Heart left ventricle (tissue), 16 donors: ENCODE measurements at regions of chr4 and their contacts with region 1.

Region 1: DNA sequence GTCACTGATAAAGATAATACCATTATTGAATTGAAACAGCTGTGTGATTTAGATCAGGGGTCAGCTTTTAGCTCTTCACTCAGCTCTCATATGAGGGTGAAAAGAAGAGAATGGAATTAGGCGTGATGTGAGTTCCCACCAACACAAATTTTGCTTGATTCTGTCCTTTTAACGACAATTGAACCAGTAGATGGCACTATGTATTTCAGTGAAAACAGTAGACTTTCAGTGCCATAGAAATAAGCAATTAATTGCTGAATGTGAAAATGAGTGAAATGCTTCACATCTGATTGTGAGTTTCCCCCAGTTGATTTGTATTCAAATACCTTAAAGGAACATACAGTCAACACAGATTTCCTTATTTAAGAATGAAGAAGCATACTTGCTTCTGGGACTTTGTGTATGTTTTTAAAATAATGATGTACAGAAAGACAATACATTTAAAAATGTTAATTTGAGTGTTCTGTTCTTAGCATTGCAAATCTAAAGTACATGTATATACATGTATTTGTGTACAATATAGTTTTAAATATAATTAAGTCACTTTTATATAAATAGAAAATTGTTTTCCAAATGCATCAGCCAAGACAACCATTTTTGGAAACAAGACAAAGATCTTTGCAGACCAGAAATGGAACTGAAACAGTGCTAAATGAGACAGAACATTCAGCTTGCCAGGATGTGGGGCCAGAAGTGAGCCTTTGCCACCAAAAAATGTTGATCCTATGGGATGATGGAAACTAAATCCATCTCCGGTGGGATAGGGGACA is 178.8 kb downstream of the SNCA start:
- DNase-seq: no peak
- ATAC-seq: no peak
- H3K4me3 ChIP-seq: no peak overlapping the region
- H3K27ac ChIP-seq: no peak overlapping the region
- H3K4me1 ChIP-seq: peaks cover 0 to 5% (median 0%) of the 10 kb centered on the region in 12 donors
- H3K27me3 ChIP-seq: no peaks in the 10 kb centered on the region
- CTCF ChIP-seq: peak in 10 of 12 donors; percentile 19 to 58 (median 39)
- POLR2A ChIP-seq: no peak

Region 2: GRCh38 chr4:89528526-89529133 is 129.5 kb before region 1 on chr4:
- intact Hi-C with region 1: no loop called
- DNase-seq: no peak
- ATAC-seq: no peak
- H3K4me3 ChIP-seq: no peak overlapping the region
- H3K27ac ChIP-seq: no peak overlapping the region
- H3K4me1 ChIP-seq: no peaks in the 10 kb centered on the region
- H3K27me3 ChIP-seq: peaks cover 0 to 2% (median 0%) of the 10 kb centered on the region in 9 donors
- CTCF ChIP-seq: no peak
- POLR2A ChIP-seq: no peak

Region 3: GRCh38 chr4:89619206-89619962 is 38.7 kb before region 1 on chr4:
- intact Hi-C with region 1: no loop called
- DNase-seq: no peak
- ATAC-seq: no peak
- H3K4me3 ChIP-seq: no peak overlapping the region
- H3K27ac ChIP-seq: no peak overlapping the region
- H3K4me1 ChIP-seq: no peaks in the 10 kb centered on the region
- H3K27me3 ChIP-seq: no peaks in the 10 kb centered on the region
- CTCF ChIP-seq: no peak
- POLR2A ChIP-seq: no peak

Region 4: GRCh38 chr4:89765966-89766365 is 107.8 kb after region 1 on chr4:
- intact Hi-C with region 1: loop called in 1 of 10 experiments (anchors 10 kb)
- DNase-seq: peak in 3 of 5 donors; percentile 21 to 55 (median 40)
- ATAC-seq: peak; percentile 86 to 96 (median 90)
- H3K4me3 ChIP-seq: no peak overlapping the region
- H3K27ac ChIP-seq: peak overlapping the region in 9 of 12 donors; percentile 3 to 87 (median 59)
- H3K4me1 ChIP-seq: peaks cover 0 to 19% (median 6%) of the 10 kb centered on the region in 12 donors
- H3K27me3 ChIP-seq: no peaks in the 10 kb centered on the region
- CTCF ChIP-seq: no peak
- POLR2A ChIP-seq: no peak

Region 5: DNA sequence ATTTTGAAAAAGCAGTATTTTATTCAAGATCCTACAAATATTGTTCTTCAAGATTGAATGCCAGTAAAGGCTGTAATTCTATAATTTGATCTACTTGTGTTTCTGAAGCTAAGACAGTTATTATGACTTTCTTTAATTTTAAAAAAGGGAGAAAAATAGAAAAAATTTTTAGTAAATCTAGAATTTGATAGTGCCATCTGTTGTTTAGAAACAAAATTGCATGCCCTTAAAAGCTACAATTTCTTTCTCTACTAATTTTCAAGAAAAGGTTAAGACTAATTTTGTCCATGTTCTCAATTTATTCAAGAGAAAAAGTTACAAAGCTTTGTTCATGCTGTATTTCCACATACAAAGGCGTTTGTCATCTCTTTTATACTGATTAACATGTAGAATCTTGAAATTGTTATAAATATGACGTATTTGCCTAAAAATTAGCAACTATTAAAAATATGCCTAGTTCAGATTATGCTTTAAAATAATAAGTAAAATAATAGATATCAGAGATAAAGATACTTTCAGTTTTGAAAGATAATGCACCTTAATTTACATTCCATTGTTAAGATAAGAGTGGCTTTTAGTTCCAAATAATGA is 211.0 kb after region 1 on chr4:
- intact Hi-C with region 1: loop called in 8 of 10 experiments (anchors 2 to 10 kb)
- DNase-seq: no peak
- ATAC-seq: no peak
- H3K4me3 ChIP-seq: no peak overlapping the region
- H3K27ac ChIP-seq: no peak overlapping the region
- H3K4me1 ChIP-seq: no peaks in the 10 kb centered on the region
- H3K27me3 ChIP-seq: no peaks in the 10 kb centered on the region
- CTCF ChIP-seq: peak; percentile 22 to 68 (median 48)
- POLR2A ChIP-seq: no peak

Region 6: GRCh38 chr4:89878611-89879010 is 220.5 kb after region 1 on chr4:
- intact Hi-C with region 1: loop called in 6 of 10 experiments (anchors 5 to 10 kb)
- DNase-seq: no peak
- ATAC-seq: no peak
- H3K4me3 ChIP-seq: no peak overlapping the region
- H3K27ac ChIP-seq: no peak overlapping the region
- H3K4me1 ChIP-seq: no peaks in the 10 kb centered on the region
- H3K27me3 ChIP-seq: no peaks in the 10 kb centered on the region
- CTCF ChIP-seq: no peak
- POLR2A ChIP-seq: no peak